ENCODE measurements at regions of chr3 and their contacts with region 1.

Region 1: GRCh38 chr3:197736491-197737318 is at the start of gene RUBCN:
- DNase-seq: peak; percentile 81 to 97 (median 92)
- ATAC-seq: peak; percentile 96
- H3K4me3 ChIP-seq: peak within 1 kb of the TSS; percentile 58 to 90
- H3K4me3 Mint-ChIP-seq: peak within 1 kb of the TSS; percentile 89
- H3K27ac ChIP-seq: peak within 1 kb of the TSS; percentile 73 to 74
- H3K27ac Mint-ChIP-seq: peak within 1 kb of the TSS; percentile 91
- H3K4me1 ChIP-seq: peaks cover 18% of the 10 kb centered on the region
- H3K4me1 Mint-ChIP-seq: peaks cover 37% of the 10 kb centered on the region
- H3K27me3 ChIP-seq: no peaks in the 10 kb centered on the region
- H3K27me3 Mint-ChIP-seq: no peaks in the 10 kb centered on the region
- CTCF ChIP-seq: no peak
- total RNA-seq, gene RUBCN: 32.6 to 33.6 TPM

Region 2: DNA sequence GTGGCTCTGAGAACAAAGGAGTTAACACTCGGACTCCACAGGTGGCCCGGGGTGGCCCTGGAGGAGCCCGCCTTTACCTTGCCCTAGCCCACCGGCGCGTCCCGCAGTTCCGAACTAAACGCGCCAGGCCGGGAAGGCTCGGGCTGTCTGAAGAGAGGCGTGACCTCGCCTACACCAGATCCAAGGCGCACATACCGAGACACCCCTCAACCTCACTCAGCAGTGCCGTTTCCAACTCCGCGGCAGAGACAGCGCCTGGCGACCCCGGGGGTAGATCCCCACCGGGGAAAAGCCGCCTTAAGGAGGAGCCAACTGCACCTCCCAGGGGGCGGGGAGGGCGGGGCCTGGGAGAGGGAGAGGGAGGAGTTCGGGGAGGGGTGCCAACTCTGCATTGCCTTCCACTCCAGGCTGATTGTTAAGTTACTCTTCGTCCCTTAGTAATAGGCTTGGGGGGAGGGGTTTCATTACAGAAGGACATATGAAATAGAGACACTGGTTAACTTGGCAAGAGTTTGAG is 438.3 kb before region 1 on chr3 and contains the start of gene DLG1:
- CTCF ChIA-PET with region 1: no interaction called
- POLR2A ChIA-PET with region 1: no interaction called
- intact Hi-C with region 1: loop called in 1 of 2 experiments (anchors 10 kb)
- DNase-seq: peak; percentile 52 to 88 (median 77)
- ATAC-seq: peak; percentile 62
- H3K4me3 ChIP-seq: peak within 1 kb of the TSS; percentile 95 to 97
- H3K4me3 Mint-ChIP-seq: peak within 1 kb of the TSS; percentile 91
- H3K27ac ChIP-seq: peak within 1 kb of the TSS; percentile 62 to 76
- H3K27ac Mint-ChIP-seq: peak within 1 kb of the TSS; percentile 94
- H3K4me1 ChIP-seq: peaks cover 16% of the 10 kb centered on the region
- H3K4me1 Mint-ChIP-seq: peaks cover 43% of the 10 kb centered on the region
- H3K27me3 ChIP-seq: no peaks in the 10 kb centered on the region
- H3K27me3 Mint-ChIP-seq: peaks cover 2% of the 10 kb centered on the region
- CTCF ChIP-seq: no peak
- total RNA-seq, gene DLG1: 70.9 to 72.9 TPM

Region 3: DNA sequence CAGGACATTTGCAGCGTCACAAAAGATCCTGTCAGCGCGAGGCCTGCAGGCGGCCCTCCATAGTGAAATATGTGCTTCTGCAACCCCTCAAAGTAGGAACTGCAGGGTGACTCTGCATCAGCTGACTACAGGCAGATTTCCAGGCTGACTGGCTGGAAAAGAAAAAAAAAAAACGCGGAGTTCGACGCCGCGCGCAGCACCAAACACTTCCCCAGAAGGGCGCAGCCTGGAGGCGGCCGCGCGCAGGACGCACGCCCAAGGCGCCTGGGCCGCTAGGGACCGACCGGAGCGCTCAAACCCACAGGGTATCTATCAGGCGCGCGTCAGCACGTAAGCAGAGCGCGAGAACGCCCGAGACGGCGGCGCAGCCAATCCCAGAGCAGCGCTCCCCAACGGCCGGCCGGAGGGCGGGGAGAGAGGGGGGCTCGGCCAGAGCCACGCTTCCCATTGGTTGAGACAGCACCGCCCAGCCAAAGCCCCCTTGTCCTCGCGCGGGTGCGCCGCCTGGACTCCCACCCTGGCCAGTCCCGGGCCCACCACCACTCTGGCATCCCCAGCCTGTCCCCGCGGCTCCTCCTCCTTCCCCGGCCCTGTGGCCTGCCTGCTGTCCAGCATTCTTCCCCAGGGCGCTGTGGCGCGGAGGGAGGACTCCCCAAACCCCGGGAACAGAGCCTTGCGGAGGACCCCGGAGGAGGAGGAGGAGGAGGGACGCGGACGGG is 182.0 kb before region 1 on chr3:
- CTCF ChIA-PET with region 1: no interaction called
- POLR2A ChIA-PET with region 1: no interaction called
- intact Hi-C with region 1: loop called in 1 of 2 experiments (anchors 2 kb)
- DNase-seq: peak; percentile 80 to 96 (median 89)
- ATAC-seq: peak; percentile 95
- H3K4me3 ChIP-seq: peak overlapping the region; percentile 92 to 95
- H3K4me3 Mint-ChIP-seq: peak overlapping the region; percentile 91
- H3K27ac ChIP-seq: peak overlapping the region; percentile 86 to 88
- H3K27ac Mint-ChIP-seq: peak overlapping the region; percentile 93
- H3K4me1 ChIP-seq: peaks cover 6% of the 10 kb centered on the region
- H3K4me1 Mint-ChIP-seq: peaks cover 21% of the 10 kb centered on the region
- H3K27me3 ChIP-seq: no peaks in the 10 kb centered on the region
- H3K27me3 Mint-ChIP-seq: peaks cover 8% of the 10 kb centered on the region
- CTCF ChIP-seq: peak; percentile 48

Region 4: DNA sequence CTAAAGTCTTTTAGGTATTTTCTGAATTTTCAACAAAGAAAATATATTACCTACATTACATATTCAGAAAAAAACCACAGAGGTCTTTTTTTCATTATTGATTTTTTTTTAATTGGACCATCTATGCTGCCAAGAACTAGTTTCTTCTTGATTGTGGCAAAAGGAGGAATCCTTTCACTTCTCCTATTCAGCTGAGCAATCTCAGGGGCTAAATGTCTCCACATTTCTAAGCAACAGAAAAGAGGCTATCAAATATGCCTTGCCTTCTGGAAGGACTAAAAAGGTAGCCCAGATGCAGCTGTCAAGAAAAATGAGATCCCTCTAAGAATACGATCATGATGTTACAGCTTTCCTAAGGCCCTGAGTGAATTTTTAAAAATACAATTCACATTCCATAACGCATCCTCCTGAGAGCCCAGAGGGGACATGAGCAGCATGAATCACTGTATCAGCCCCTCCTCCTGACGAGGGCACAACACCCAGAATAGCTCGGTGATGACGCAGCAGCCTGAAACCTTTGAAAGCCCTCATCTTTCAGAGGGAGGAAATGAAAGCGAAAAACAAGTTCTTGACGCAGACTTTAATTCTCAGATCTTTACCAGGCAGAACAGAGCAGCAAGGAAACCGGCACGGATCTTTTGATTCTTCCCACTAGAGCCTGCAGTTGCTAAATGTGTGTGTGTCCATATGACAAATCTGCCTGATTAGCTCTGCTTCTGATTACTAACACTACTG is 24.6 kb before region 1 on chr3:
- CTCF ChIA-PET with region 1: interaction called, 4 read pairs
- POLR2A ChIA-PET with region 1: interaction called, 17 read pairs
- intact Hi-C with region 1: loop called (anchors 1 kb)
- DNase-seq: peak; percentile 71 to 98 (median 86)
- ATAC-seq: peak; percentile 98
- H3K4me3 ChIP-seq: peak overlapping the region; percentile 29 to 41
- H3K4me3 Mint-ChIP-seq: peak overlapping the region; percentile 75
- H3K27ac ChIP-seq: peak overlapping the region; percentile 59 to 90
- H3K27ac Mint-ChIP-seq: peak overlapping the region; percentile 94
- H3K4me1 ChIP-seq: peaks cover 14% of the 10 kb centered on the region
- H3K4me1 Mint-ChIP-seq: peaks cover 24% of the 10 kb centered on the region
- H3K27me3 ChIP-seq: no peaks in the 10 kb centered on the region
- H3K27me3 Mint-ChIP-seq: no peaks in the 10 kb centered on the region
- CTCF ChIP-seq: no peak

Region 5: DNA sequence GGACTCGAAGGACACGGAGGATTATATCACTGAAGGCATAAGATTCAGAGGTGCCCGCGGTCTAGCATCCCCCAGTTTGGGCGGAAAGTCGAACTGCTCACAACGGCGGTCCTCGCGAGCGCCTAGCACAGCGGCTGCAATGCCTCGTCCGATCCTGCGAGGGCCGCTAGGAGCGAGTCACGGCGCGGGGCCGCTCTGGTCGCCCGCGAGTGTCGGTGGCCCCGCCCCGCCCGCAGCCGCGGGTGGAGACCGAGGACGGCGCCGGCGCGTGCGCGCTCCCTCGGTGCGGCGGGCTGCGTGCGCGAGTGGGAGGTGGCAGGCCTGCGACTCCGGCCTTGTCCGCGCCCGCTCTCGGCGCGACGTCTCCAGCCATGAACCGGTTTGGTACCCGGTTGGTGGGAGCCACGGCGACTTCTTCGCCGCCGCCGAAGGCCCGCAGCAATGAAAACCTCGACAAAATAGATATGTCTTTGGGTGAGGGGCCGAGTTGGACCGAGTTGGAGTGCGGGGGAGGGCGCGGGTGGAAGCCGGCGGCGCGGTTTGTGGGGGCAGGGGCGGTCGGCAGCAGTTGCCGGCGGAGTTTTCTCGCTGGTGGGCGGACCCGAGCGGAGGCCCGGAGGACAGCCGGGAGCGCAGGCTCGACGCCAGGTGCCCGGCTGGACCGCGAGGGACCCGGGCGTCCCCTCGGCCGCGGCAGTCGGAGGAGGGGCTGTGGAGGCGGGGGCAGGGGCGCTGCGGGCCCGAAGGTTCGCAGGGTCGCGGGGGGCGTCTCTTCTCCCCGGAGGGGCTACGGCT is 13.1 kb after region 1 on chr3 and contains the start of gene FYTTD1:
- CTCF ChIA-PET with region 1: interaction called, 3 read pairs
- POLR2A ChIA-PET with region 1: interaction called, 3 read pairs
- intact Hi-C with region 1: loop called (anchors 1 kb)
- DNase-seq: peak; percentile 72 to 95 (median 89)
- ATAC-seq: peak; percentile 76
- H3K4me3 ChIP-seq: peak within 1 kb of the TSS; percentile 57 to 73
- H3K4me3 Mint-ChIP-seq: peak within 1 kb of the TSS; percentile 96
- H3K27ac ChIP-seq: peak within 1 kb of the TSS; percentile 64 to 79
- H3K27ac Mint-ChIP-seq: peak within 1 kb of the TSS; percentile 98
- H3K4me1 ChIP-seq: peaks cover 33% of the 10 kb centered on the region
- H3K4me1 Mint-ChIP-seq: peaks cover 46% of the 10 kb centered on the region
- H3K27me3 ChIP-seq: no peaks in the 10 kb centered on the region
- H3K27me3 Mint-ChIP-seq: no peaks in the 10 kb centered on the region
- CTCF ChIP-seq: peak; percentile 15
- total RNA-seq, gene FYTTD1: 80.9 to 88.0 TPM

Region 6: GRCh38 chr3:197847866-197848401 is 111.2 kb after region 1 on chr3:
- CTCF ChIA-PET with region 1: no interaction called
- POLR2A ChIA-PET with region 1: no interaction called
- intact Hi-C with region 1: no loop called
- DNase-seq: peak in 4 of 9 experiments; percentile 19 to 75 (median 36)
- ATAC-seq: peak; percentile 94
- H3K4me3 ChIP-seq: peak overlapping the region; percentile 24 to 32
- H3K4me3 Mint-ChIP-seq: peak overlapping the region; percentile 81
- H3K27ac ChIP-seq: peak overlapping the region; percentile 50 to 79
- H3K27ac Mint-ChIP-seq: peak overlapping the region; percentile 96
- H3K4me1 ChIP-seq: peaks cover 12% of the 10 kb centered on the region
- H3K4me1 Mint-ChIP-seq: peaks cover 24% of the 10 kb centered on the region
- H3K27me3 ChIP-seq: no peaks in the 10 kb centered on the region
- H3K27me3 Mint-ChIP-seq: no peaks in the 10 kb centered on the region
- CTCF ChIP-seq: no peak

Measured in CD8-positive, alpha-beta T cell (primary cell).